ENCODE measurements at regions of chr16 and their contacts with region 1.

Region 1: DNA sequence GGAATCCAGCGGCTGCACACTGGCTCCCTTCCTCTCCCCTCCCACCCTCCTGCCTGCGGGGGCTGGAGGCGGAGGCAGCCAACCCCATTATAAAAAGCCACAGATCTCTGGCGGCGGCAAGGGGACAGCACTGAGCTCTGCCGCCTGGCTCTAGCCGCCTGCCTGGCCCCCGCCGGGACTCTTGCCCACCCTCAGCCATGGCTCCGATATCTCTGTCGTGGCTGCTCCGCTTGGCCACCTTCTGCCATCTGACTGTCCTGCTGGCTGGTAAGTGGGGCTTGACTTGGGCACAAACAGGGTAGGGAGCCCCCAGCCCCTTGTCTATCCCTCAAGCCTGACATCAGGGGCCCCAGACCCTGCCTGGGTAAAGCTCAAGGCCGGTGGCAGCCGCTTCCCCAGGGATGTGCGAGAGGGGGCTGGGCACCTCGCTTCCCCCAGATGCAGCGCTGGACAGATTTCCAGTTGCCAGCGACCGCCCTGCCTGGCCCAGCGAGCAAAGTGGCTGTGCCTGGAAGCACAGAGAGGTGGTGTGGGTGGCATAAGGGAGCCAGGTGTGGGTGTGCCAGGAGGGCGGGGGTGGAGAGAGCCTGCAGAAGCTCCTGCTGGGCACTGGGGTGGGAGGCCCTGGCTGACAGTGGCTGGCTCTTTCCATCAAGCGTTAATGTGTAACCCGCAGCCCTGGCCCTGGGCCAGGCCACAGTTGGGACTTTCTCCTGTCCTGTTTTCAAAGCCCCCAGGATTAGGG is at the start of gene CX3CL1:
- DNase-seq: no peak
- ATAC-seq: peak; percentile 16
- H3K4me3 ChIP-seq: no peak within 1 kb of the TSS
- H3K27ac ChIP-seq: no peak within 1 kb of the TSS
- H3K4me1 ChIP-seq: peaks cover 14% of the 10 kb centered on the region
- H3K27me3 ChIP-seq: no peaks in the 10 kb centered on the region
- CTCF ChIP-seq: no peak
- EP300 ChIP-seq: 0 out of 4 replicates have a peak, but pooled peaks of 1 of the 2 experiments have one; percentile 22
- POLR2A ChIP-seq: no peak
- RAD21 ChIP-seq: no peak
- polyA plus RNA-seq, gene CX3CL1: 0.03 to 0.05 TPM

Region 2: DNA sequence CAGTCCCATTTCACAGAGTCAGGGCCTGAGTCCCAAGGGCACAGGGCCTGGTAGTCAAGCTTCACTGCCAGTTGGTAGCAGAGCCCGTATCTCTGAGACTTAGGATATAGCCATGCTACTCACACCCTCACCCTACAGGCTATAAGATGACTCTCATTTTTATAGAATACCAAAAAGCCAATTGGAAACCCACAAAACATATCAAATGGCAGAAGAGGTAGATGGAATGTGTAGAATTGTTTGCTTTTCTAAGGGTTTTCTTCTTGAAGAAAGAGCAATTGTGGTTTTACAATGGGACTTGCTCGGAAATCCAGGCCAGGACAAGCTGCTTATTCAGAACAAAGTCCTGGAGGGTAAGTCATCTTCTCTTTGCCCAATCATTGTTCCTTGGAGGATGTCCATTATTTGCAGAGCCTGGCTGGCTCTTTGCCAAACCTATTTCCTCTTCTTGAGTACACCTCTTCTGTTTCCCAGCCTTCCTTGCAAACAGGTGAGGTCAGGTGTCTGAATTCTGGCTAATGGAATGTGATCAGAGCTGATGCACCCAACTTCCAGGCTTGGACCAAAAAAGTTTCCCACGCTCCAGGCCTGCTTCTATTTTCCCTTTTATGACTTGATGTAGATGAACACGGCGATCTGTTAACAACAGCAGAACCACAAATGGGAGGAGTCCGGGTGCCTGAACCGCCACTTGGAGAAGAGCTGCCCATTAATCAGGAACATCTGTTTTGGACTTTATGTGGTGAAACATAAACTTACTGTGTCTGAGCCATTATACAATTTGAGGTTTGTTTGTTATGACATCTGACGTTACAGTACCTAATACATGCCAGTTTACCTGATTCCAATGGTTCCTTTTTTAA is 30.9 kb before region 1 on chr16:
- CTCF ChIA-PET with region 1: interaction called, 14 read pairs
- POLR2A ChIA-PET with region 1: interaction called, 5 read pairs
- RAD21 ChIA-PET with region 1: interaction called, 41 read pairs
- SMC1A ChIA-PET with region 1: interaction called, 21 read pairs
- in situ Hi-C with region 1: no loop called
- intact Hi-C with region 1: loop called (anchors 1 kb)
- DNase-seq: no peak
- ATAC-seq: peak; percentile 43
- H3K4me3 ChIP-seq: no peak overlapping the region
- H3K27ac ChIP-seq: peak overlapping the region; percentile 38
- H3K4me1 ChIP-seq: peaks cover 44% of the 10 kb centered on the region
- H3K27me3 ChIP-seq: no peaks in the 10 kb centered on the region
- CTCF ChIP-seq: no peak
- EP300 ChIP-seq: no peak
- POLR2A ChIP-seq: no peak
- RAD21 ChIP-seq: 0 out of 2 replicates have a peak, but pooled peaks have one; percentile 1

Region 3: DNA sequence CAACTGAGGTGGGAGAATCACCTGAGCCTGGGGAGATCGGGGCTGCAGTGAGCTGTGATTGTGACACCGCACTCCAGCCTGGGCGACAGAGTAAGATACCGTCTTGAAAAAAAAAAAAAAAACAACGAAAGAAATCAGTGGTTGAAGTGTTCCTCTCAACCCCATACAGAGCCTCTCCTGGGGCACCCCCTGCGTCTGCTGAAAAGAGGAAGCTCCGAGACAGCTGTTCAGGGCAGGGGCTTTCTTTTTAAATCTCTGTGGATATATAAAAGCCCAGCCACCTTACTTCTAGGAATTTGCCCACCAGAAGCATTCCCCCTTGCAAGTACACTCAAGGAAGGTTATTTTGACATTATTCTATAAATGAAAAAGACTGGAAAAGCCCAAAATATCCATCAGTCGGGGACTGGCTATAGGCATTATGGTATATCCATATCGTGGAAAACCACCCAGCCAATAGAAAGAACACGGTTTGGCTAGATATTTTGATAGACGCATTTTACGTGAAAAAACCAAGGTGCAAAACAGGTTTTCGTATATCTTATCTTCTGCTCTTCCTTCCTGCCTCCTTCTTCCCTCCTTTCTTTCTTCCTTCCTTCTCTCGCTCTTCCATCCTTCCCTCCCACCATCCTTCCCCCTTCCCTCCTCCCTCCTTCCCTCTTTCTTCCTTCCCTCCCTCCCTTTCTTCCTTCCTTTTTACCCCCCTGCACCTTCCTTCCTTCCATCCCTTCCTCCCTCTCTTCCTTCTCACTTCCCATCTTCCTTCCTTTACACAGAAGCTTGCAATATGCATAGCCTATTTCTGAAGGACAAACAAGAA is 23.1 kb before region 1 on chr16:
- CTCF ChIA-PET with region 1: interaction called, 11 read pairs
- POLR2A ChIA-PET with region 1: interaction called, 3 read pairs
- RAD21 ChIA-PET with region 1: interaction called, 7 read pairs
- SMC1A ChIA-PET with region 1: interaction called, 10 read pairs
- in situ Hi-C with region 1: no loop called
- intact Hi-C with region 1: no loop called
- DNase-seq: peak; percentile 44
- ATAC-seq: peak; percentile 97
- H3K4me3 ChIP-seq: peak overlapping the region; percentile 53; the same call in 1 of the 2 replicates
- H3K27ac ChIP-seq: no peak overlapping the region
- H3K4me1 ChIP-seq: peaks cover 27% of the 10 kb centered on the region
- H3K27me3 ChIP-seq: no peaks in the 10 kb centered on the region
- CTCF ChIP-seq: no peak
- EP300 ChIP-seq: peak in 1 of 2 experiments; percentile 66; a peak in 2 of 4 replicates
- POLR2A ChIP-seq: no peak
- RAD21 ChIP-seq: peak; percentile 19; the same call in 1 of the 2 replicates

Region 4: GRCh38 chr16:57358527-57359095 is 13.9 kb before region 1 on chr16 and contains the start of gene CCL22:
- CTCF ChIA-PET with region 1: interaction called, 12 read pairs
- POLR2A ChIA-PET with region 1: interaction called, 18 read pairs
- RAD21 ChIA-PET with region 1: interaction called, 11 read pairs
- SMC1A ChIA-PET with region 1: interaction called, 26 read pairs
- in situ Hi-C with region 1: no loop called
- intact Hi-C with region 1: loop called (anchors 2 kb)
- DNase-seq: peak; percentile 45
- ATAC-seq: peak; percentile 71
- H3K4me3 ChIP-seq: peak within 1 kb of the TSS; percentile 37; the same call in 1 of the 2 replicates
- H3K27ac ChIP-seq: peak within 1 kb of the TSS; percentile 30
- H3K4me1 ChIP-seq: peaks cover 23% of the 10 kb centered on the region
- H3K27me3 ChIP-seq: no peaks in the 10 kb centered on the region
- CTCF ChIP-seq: no peak
- EP300 ChIP-seq: no peak; a peak in 1 of 4 replicates
- POLR2A ChIP-seq: peak; percentile 89
- RAD21 ChIP-seq: no peak
- polyA plus RNA-seq, gene CCL22: 581 to 591 TPM

Region 5: DNA sequence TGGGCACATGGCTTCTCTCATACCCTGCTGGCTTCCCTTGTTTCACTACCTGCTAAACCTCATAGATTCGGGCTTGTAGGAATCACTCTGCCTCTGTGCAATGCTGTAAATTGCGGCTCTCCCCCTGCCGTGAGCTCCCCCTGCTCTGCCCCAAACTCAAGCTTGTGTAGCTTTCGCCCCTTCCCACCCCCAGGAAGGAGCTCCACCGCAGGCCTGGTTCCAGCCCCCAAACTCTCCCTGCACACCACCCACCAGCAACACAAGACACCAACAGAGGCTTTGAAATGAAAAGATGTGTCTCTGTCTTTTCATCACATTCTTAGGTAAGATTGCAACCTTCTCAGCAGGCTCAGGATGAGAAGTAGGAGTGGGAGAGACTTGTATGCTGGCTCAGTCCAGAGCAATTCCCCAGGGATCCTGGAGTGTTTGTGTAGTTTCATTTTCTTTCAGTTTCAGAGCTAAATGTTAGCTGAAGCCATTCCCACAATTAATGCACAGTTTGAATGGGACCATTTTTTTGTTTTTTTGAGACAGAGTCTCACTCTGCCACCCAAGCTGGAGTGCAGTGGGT is 13.9 kb after region 1 on chr16:
- CTCF ChIA-PET with region 1: interaction called, 5 read pairs
- POLR2A ChIA-PET with region 1: interaction called, 30 read pairs
- RAD21 ChIA-PET with region 1: interaction called, 38 read pairs
- SMC1A ChIA-PET with region 1: interaction called, 49 read pairs
- in situ Hi-C with region 1: no loop called
- intact Hi-C with region 1: loop called (anchors 1 kb)
- DNase-seq: no peak
- ATAC-seq: no peak
- H3K4me3 ChIP-seq: no peak overlapping the region
- H3K27ac ChIP-seq: no peak overlapping the region
- H3K4me1 ChIP-seq: peaks cover 51% of the 10 kb centered on the region
- H3K27me3 ChIP-seq: no peaks in the 10 kb centered on the region
- CTCF ChIP-seq: no peak
- EP300 ChIP-seq: no peak
- POLR2A ChIP-seq: no peak
- RAD21 ChIP-seq: no peak

Region 6: DNA sequence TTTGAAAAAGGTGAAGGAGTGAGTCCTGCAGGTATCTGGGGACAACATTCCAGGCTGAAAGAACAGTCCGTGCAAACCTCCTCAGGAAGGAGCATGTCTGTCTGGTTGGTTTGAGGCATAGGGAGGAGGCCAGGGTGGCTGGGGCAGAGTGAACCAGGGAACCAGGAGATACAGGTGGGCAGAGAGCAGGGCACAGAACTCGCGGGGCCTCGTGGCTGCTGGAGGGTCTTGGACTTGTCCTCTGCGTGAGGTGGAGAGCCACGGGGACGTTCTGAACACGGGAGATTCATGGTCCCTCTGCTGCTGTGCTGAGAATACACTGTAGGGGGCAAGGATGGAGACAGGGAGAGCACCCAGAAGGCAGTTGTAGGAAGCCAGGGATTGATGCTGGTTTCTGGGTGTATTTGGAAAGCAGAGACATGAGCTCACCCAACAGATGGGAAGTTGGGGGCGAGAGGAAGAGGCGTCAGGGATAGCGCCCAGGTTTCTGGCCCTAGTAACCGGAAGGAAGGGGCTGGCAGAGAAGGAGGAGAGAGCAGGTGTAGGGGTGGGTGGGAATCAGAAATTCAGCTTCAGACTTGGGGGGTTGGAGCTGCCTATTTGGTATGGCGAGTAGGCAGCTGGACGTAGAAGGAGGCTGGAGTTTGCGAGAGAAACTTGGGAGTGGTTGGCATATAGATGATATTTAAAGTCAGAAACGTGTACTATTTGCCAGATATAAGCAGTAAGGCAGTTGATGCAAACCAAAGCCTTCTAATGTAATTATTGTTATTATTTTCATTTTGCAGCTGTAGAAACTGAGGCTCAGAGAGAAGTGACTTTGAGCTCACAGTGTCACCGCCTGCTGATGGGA is 31.6 kb after region 1 on chr16 and contains the start of gene CCL17:
- CTCF ChIA-PET with region 1: no interaction called
- POLR2A ChIA-PET with region 1: interaction called, 3 read pairs
- RAD21 ChIA-PET with region 1: interaction called, 5 read pairs
- SMC1A ChIA-PET with region 1: interaction called, 10 read pairs
- in situ Hi-C with region 1: no loop called
- intact Hi-C with region 1: no loop called
- DNase-seq: no peak
- ATAC-seq: no peak
- H3K4me3 ChIP-seq: no peak within 1 kb of the TSS
- H3K27ac ChIP-seq: no peak within 1 kb of the TSS
- H3K4me1 ChIP-seq: peaks cover 7% of the 10 kb centered on the region
- H3K27me3 ChIP-seq: no peaks in the 10 kb centered on the region
- CTCF ChIP-seq: 0 out of 6 replicates have a peak, but pooled peaks of 1 of the 3 experiments have one; percentile 3
- EP300 ChIP-seq: no peak
- POLR2A ChIP-seq: no peak
- RAD21 ChIP-seq: no peak
- polyA plus RNA-seq, gene CCL17: 26.4 to 31.2 TPM

Measured in GM12878 (cell line).